Right cardiac atrium (tissue), 5 donors: ENCODE measurements at regions of chr1 and their contacts with region 1.

Region 1: DNA sequence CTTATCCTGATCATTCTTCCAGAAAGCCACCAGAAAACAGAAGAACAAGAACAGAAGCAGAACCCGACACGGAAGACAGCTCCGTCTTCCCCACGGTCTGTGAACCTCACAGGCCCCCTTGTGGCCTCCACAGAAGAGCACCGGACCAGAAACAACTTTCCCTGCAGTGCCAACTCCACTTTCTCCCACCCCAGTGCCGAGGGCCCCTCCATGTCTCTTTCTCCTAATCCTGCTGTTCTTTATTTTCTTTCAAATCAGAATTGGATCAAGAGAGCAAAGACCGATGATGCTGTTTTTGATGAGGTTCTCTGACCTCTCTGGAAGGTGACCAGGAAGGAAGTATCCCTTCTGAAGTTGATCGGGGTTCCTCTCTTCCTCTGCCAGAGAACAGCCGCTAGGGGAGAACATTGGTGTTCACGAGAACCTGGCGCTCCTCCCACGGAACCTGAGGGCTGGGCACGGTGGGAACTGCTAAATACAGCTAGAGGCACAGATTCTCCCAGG is 58.9 kb upstream of the CTTNBP2NL start:
- DNase-seq: peak; percentile 58 to 79 (median 66)
- ATAC-seq: peak; percentile 85 to 89
- H3K4me3 ChIP-seq: no peak overlapping the region
- H3K27ac ChIP-seq: no peak overlapping the region
- H3K4me1 ChIP-seq: no peaks in the 10 kb centered on the region
- H3K27me3 ChIP-seq: no peaks in the 10 kb centered on the region

Region 2: DNA sequence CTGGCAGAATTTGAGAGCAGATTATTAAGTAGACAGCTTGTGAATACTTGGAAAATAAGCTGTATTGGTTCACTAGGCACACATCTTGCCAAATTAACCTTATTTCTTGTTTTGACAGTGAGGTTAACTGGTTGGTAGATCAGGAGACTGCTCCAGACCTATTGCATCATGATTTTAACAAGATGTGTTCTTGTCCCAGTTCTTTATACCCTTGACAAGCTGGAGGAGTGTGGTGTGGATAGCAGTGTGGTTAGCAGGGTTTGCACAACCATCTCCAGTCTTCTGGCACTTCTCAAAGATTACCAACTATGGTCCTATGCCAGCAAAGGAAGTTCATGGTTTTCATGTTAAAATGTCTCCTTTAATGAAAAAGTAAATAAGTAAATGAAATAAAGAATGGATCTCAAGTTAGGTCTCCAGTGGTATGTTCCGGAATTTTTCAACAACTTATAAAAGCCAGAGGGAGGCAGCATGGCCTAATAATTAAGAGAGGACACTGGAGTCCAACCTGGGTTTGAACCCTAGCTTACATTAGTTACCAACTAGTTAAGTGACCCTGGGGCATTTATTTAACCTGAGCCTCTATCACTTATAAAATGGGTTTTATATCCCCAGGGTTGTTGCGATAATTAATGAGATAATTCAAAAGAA is 547.3 kb before region 1 on chr1:
- intact Hi-C with region 1: loop called in 1 of 4 experiments (anchors 10 kb)
- DNase-seq: no peak
- ATAC-seq: peak; percentile 37 to 50
- H3K4me3 ChIP-seq: no peak overlapping the region
- H3K27ac ChIP-seq: no peak overlapping the region
- H3K4me1 ChIP-seq: peaks cover 4% of the 10 kb centered on the region
- H3K27me3 ChIP-seq: no peaks in the 10 kb centered on the region

Region 3: GRCh38 chr1:112058815-112059450 is 278.1 kb before region 1 on chr1:
- intact Hi-C with region 1: loop called in 1 of 4 experiments (anchors 10 kb)
- DNase-seq: no peak
- ATAC-seq: no peak
- H3K4me3 ChIP-seq: no peak overlapping the region
- H3K27ac ChIP-seq: no peak overlapping the region
- H3K4me1 ChIP-seq: no peaks in the 10 kb centered on the region
- H3K27me3 ChIP-seq: no peaks in the 10 kb centered on the region